ENCODE measurements at regions of chr6 and their contacts with region 1.

Region 1: DNA sequence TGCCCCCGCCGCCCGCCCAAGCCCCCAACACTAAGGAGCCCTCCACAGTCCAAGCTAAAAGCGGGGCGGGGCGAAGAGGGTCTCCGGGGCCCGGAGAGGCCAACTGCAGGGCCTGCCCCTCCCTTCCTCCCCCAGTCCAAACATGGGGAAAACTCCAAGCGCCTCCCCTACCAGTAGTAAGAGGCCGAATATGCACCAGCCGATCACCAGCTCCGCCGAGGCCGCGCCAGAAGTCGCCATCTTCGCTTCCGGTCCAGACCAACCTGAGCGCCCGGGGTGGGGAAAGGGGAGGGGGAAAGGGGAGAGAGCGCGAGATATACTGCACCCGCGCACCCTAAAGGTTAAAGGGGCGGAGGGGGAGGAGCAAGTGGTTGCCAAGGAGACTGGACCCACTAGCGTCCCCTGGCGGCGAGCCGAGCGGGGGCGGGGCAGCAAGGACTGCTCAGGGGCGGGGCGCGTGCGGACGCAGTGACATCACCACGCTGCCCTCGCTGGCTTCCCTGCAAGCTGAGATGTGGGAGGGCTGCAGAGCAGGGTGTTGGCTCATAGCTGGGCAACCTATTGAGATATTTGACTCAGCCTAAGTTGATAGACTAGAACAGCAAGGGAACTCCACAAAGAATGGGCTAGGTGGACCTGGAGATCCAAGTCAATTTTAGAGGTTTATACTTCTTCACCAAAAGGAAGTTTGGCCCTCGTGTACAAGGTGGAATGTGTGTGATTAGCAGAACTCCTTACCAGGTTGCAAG is at the start of gene LMBRD1:
- DNase-seq: peak; percentile 95
- CTCF ChIP-seq: peak; percentile 94

Region 2: DNA sequence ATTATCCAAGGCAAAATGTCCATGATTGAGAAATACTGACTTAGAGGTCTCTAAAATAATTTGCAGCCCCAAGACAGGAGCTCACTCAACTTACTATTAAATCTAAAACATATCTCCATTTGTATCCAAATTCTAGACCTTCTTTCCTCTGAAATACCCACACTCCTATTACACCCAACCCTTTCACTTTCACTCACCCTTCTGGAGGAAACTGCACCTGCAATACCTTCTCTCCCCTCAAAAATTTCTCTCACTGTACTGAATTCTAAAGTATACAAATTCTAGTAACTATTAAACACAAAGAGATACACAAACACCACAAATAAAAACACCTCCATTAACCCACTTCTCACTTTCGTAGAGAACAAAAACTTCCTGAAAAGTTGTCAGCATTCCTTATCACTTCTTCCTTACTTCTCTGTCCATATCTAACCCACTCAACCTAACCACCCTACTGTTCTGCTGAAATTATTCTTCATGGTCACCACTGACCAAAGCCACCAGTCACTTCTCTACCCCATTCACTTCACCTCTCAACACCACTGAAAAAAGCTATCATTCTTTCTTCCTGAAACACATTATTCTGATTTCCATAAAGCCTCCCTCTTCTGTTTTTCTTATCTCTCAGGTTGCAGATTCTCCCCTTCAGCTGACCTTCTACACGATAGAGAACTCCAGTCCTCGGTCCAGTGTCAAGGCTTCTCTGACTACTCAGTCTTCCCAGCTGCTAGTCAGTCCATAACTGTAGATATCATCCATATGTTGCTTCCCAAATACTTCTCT is 12.0 kb before region 1 on chr6:
- CTCF ChIA-PET with region 1: interaction called, 15 read pairs
- POLR2A ChIA-PET with region 1: no interaction called
- DNase-seq: no peak
- CTCF ChIP-seq: no peak

Region 3: DNA sequence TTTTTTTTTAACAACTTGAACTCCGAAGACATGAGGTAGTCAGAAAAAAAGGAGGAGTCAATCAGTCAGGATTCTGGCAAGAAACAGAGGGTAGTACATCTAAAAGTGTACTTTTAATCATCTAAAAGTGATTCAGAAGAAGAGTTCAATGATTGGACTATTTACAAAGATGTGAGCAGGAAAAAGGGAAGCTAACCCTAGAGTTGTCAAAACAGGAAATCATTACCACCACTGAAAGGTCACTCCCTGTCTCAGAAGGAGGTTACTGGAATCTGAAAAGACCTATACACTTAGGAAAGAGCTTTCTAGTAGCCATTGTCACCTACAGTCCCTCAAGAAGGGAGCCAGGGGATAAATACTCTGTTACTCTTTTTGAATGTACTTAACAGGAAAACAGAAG is 16.7 kb after region 1 on chr6:
- CTCF ChIA-PET with region 1: interaction called, 79 read pairs
- POLR2A ChIA-PET with region 1: no interaction called
- DNase-seq: no peak
- CTCF ChIP-seq: no peak

Region 4: GRCh38 chr6:69820438-69820837 is 23.6 kb after region 1 on chr6:
- CTCF ChIA-PET with region 1: interaction called, 79 read pairs
- POLR2A ChIA-PET with region 1: no interaction called
- DNase-seq: no peak
- CTCF ChIP-seq: no peak

Region 5: DNA sequence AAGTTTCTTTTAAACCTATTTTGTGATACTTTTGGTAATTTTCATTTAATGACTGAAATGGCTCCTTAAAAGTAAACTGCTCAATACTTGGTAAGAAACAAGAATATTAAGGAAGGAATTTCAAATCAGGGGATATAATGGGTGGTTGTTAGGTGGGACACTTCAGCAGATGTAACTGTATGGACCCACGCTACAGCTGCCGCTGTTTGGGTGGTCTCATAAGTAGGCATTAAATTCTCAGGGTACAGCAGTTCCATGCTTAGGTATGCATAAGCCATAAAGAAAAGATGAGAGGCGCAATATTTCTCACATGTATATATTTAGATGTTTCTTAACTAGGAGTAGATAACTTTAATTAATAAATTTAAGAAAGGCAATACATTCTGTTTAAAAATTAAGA is 104.5 kb after region 1 on chr6:
- CTCF ChIA-PET with region 1: no interaction called
- POLR2A ChIA-PET with region 1: no interaction called
- DNase-seq: no peak
- CTCF ChIP-seq: no peak

Measured in GM10248 (cell line).